Upper lobe of right lung (tissue), 1 donor: ENCODE measurements at regions of chr15 and their contacts with region 1.

Region 1: DNA sequence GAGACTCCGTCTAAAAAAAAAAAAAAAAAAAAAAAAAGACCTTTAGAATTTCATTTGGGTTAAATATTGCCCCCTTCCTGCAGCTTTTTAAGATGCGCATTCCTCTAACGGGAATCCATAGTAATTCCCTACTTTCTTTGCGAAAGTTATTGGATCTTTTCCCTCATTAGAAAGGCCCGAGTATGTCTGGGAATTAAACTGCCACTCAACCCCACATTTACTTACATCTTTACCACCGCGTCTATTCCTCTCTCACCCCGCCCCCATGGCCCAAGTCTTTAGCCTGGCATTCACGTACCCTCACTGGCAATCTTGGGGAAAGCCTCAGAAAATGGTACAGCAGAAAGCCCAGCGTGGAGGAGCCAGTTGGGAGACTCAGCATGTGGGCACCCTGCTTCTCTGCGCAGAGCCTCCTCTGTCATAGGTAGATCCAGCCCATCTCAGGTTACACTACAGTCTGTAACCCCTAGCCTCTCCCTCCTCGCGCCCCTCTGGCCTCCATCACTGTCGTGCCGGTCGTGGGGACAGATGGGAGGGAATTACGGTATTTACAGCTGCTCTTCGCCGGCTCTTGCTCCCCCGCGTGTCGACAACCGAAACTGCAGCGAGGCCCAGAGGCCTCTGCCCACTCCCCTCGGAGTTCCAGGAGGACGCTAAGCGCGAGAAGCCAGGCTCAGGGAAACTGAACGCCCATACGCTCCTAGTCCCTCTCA is 6.4 kb upstream of the ANKDD1A start:
- DNase-seq: peak; percentile 89
- ATAC-seq: peak; percentile 97
- H3K4me3 ChIP-seq: peak overlapping the region; percentile 28
- H3K27ac ChIP-seq: no peak overlapping the region
- H3K4me1 ChIP-seq: peaks cover 6% of the 10 kb centered on the region
- H3K27me3 ChIP-seq: no peaks in the 10 kb centered on the region
- CTCF ChIP-seq: peak; percentile 91

Region 2: GRCh38 chr15:64856429-64857145 is 48.7 kb before region 1 on chr15:
- intact Hi-C with region 1: loop called (anchors 10 kb)
- DNase-seq: no peak
- ATAC-seq: peak; percentile 51
- H3K4me3 ChIP-seq: no peak overlapping the region
- H3K27ac ChIP-seq: peak overlapping the region; percentile 73
- H3K4me1 ChIP-seq: peaks cover 96% of the 10 kb centered on the region
- H3K27me3 ChIP-seq: no peaks in the 10 kb centered on the region
- CTCF ChIP-seq: no peak